ENCODE measurements at regions of chr5 and their contacts with region 1.

Region 1: DNA sequence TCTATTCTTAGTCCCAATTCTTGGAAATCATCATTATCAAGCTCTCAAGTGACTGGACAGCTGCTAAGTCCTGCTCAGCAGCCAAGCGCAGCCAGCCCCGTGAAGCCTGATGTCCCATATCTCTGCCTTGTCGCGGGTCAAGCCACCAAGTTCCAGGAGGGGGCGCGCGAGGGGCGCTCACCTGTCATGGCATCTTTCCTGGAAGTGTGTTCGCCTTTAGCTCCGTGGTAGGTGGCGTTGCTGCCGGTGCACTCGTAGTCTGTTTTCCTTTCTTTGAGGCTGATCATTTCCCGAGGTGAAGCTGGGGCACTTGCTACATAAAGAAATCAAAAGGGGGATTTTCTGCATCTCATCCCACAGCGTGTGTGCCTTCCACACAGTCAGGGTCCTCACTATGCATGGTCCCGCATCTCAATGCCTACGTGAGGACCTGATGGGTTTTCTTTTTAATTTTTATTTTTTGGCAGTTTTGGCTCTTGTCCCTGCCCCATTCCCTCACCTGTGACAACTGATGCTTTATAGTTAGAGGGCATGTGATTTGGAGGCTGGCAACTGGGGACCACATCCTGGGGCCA is 227.0 kb upstream of the DAP start:
- H3K4me3 ChIP-seq: no peak overlapping the region
- H3K27ac ChIP-seq: no peak overlapping the region
- H3K4me1 ChIP-seq: no peaks in the 10 kb centered on the region
- CTCF ChIP-seq: peak; percentile 67

Region 2: GRCh38 chr5:9479361-9479760 is 1508.7 kb before region 1 on chr5:
- CTCF ChIA-PET with region 1: no interaction called
- POLR2A ChIA-PET with region 1: no interaction called
- H3K4me3 ChIP-seq: no peak overlapping the region
- H3K27ac ChIP-seq: no peak overlapping the region
- H3K4me1 ChIP-seq: no peaks in the 10 kb centered on the region
- CTCF ChIP-seq: no peak

Region 3: GRCh38 chr5:10607666-10608073 is 380.3 kb before region 1 on chr5:
- CTCF ChIA-PET with region 1: no interaction called
- POLR2A ChIA-PET with region 1: no interaction called
- H3K4me3 ChIP-seq: no peak overlapping the region
- H3K27ac ChIP-seq: peak overlapping the region; percentile 54
- H3K4me1 ChIP-seq: peaks cover 10% of the 10 kb centered on the region
- CTCF ChIP-seq: no peak

Region 4: GRCh38 chr5:10885026-10885425 is 103.0 kb before region 1 on chr5:
- CTCF ChIA-PET with region 1: no interaction called
- POLR2A ChIA-PET with region 1: no interaction called
- H3K4me3 ChIP-seq: no peak overlapping the region
- H3K27ac ChIP-seq: no peak overlapping the region
- H3K4me1 ChIP-seq: no peaks in the 10 kb centered on the region
- CTCF ChIP-seq: no peak

Region 5: DNA sequence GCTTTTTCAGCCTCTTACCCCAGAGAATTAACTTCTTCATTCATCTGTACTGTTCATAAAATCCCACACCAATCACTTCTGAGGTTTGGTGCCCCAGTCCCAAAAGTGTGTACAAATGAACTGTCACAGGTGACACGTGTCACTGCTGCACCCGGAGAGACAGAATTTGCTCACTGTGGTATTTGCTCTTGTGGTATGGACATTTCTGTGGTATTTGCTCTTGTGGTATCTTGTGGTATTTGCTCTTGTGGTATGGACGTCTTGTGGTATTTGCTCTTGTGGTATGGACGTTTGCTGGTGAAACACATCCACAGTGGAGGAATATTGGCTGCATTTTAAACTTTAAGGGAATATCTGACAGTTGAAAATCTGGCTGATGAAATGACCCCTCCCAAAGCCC is 12.1 kb before region 1 on chr5:
- CTCF ChIA-PET with region 1: interaction called, 20 read pairs
- POLR2A ChIA-PET with region 1: no interaction called
- H3K4me3 ChIP-seq: no peak overlapping the region
- H3K27ac ChIP-seq: no peak overlapping the region
- H3K4me1 ChIP-seq: no peaks in the 10 kb centered on the region
- CTCF ChIP-seq: no peak

Region 6: DNA sequence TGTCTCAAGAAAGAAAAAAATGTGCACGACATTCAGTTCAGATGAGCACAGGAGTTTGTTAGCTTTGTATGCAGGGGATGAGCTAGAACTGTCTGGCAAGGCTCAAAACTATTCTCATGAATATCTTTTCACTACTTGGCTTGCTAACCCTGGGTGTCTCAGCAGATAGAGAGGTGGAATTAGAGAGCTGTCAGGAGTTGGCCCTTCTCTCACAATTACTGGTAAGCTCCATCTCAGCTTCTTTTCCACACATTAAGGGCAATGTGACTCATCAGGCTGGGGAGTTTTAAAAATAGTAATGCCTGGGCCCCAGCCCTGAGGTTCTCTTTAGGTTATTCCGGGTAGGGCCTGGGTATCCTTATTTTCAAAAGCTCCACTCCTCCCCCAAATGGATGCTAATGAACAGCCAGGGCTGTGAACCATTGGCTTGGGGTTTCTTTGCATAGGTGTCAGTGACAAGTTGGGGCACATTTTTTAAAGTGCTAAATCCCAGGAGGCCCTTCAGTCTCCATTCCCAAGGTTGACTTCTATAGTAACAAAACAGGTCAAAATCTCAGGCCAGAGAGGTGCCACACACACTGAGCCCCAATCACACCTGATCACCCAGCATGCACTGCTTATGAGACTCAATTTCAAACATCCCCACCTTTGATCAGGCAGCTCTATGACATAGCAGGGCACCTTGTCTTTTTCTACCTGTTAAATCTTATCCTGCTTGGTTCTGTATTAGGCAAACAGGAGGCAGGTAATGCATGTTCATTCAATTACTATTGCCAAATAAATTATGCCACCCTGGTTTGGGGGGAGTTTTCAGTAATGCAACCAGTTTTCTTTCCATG is 12.7 kb after region 1 on chr5:
- CTCF ChIA-PET with region 1: interaction called, 22 read pairs
- POLR2A ChIA-PET with region 1: no interaction called
- H3K4me3 ChIP-seq: no peak overlapping the region
- H3K27ac ChIP-seq: no peak overlapping the region
- H3K4me1 ChIP-seq: no peaks in the 10 kb centered on the region
- CTCF ChIP-seq: no peak

Region 7: GRCh38 chr5:11007269-11007668 is 19.3 kb after region 1 on chr5:
- CTCF ChIA-PET with region 1: interaction called, 17 read pairs
- POLR2A ChIA-PET with region 1: no interaction called
- H3K4me3 ChIP-seq: no peak overlapping the region
- H3K27ac ChIP-seq: no peak overlapping the region
- H3K4me1 ChIP-seq: no peaks in the 10 kb centered on the region
- CTCF ChIP-seq: no peak

Region 8: DNA sequence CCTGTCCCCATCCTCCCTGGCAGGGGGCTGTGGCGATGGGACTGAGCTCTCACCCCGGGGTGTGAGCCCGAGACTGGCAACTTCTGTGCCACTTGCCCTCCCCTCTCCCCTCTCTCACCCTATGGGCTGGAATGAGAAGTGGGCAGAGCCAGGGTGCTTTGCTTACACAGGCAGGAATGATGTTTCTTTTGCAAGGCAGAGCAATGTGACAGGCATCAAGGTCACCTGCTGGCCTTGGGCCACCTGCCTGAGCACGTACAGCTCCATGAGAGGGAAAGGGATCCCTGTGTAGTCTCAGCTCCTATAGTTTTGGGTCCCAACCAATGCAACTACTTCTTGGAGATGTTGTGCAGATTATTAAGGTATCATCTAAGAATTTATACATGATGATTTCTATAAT is 25.8 kb after region 1 on chr5:
- CTCF ChIA-PET with region 1: interaction called, 13 read pairs
- POLR2A ChIA-PET with region 1: no interaction called
- H3K4me3 ChIP-seq: no peak overlapping the region
- H3K27ac ChIP-seq: no peak overlapping the region
- H3K4me1 ChIP-seq: no peaks in the 10 kb centered on the region
- CTCF ChIP-seq: no peak

Measured in HEK293 (cell line).